MCF 10A (cell line): ENCODE measurements at regions of chr11 and their contacts with region 1.

Region 1: GRCh38 chr11:102268329-102269193 is 48.7 kb upstream of the BIRC3 start:
- DNase-seq: peak; percentile 96
- H3K4me3 Mint-ChIP-seq: peak overlapping the region; percentile 80
- H3K27ac Mint-ChIP-seq: peak overlapping the region; percentile 93
- H3K4me1 Mint-ChIP-seq: peaks cover 28% of the 10 kb centered on the region
- H3K27me3 Mint-ChIP-seq: no peaks in the 10 kb centered on the region
- CTCF ChIP-seq: peak; percentile 37

Region 2: GRCh38 chr11:101323997-101324396 is 944.6 kb before region 1 on chr11:
- CTCF ChIA-PET with region 1: no interaction called
- POLR2A ChIA-PET with region 1: no interaction called
- intact Hi-C with region 1: no loop called
- DNase-seq: peak; percentile 20
- H3K4me3 Mint-ChIP-seq: no peak overlapping the region
- H3K27ac Mint-ChIP-seq: no peak overlapping the region
- H3K4me1 Mint-ChIP-seq: no peaks in the 10 kb centered on the region
- H3K27me3 Mint-ChIP-seq: peaks cover 17% of the 10 kb centered on the region
- CTCF ChIP-seq: no peak

Region 3: GRCh38 chr11:101860696-101861427 is 407.7 kb before region 1 on chr11:
- CTCF ChIA-PET with region 1: interaction called, 40 read pairs
- POLR2A ChIA-PET with region 1: interaction called, 9 read pairs
- intact Hi-C with region 1: loop called (anchors 2 kb)
- DNase-seq: peak; percentile 67
- H3K4me3 Mint-ChIP-seq: no peak overlapping the region
- H3K27ac Mint-ChIP-seq: no peak overlapping the region
- H3K4me1 Mint-ChIP-seq: peaks cover 13% of the 10 kb centered on the region
- H3K27me3 Mint-ChIP-seq: no peaks in the 10 kb centered on the region
- CTCF ChIP-seq: peak; percentile 61

Region 4: DNA sequence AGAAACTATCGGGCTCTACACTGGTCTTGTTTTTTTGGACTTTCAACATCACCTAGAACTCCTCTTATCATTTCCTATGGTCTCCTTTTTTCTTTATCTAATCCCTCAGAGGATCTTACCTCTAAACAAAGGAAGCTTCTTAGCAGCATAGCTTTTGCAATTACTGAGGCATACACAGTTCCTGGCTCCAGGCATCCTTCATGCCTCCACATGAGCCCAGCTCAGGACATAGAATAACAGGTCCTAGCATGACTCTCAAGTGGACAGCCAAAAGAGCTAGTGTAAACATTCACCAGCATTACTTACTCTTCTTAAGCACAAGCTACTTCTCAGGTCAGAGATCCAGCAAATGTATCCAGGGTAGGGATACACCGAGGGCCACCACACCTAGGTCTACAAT is 204.2 kb before region 1 on chr11:
- CTCF ChIA-PET with region 1: interaction called, 4 read pairs
- POLR2A ChIA-PET with region 1: interaction called, 10 read pairs
- intact Hi-C with region 1: no loop called
- DNase-seq: peak; percentile 71
- H3K4me3 Mint-ChIP-seq: no peak overlapping the region
- H3K27ac Mint-ChIP-seq: peak overlapping the region; percentile 76
- H3K4me1 Mint-ChIP-seq: peaks cover 9% of the 10 kb centered on the region
- H3K27me3 Mint-ChIP-seq: no peaks in the 10 kb centered on the region
- CTCF ChIP-seq: no peak

Region 5: DNA sequence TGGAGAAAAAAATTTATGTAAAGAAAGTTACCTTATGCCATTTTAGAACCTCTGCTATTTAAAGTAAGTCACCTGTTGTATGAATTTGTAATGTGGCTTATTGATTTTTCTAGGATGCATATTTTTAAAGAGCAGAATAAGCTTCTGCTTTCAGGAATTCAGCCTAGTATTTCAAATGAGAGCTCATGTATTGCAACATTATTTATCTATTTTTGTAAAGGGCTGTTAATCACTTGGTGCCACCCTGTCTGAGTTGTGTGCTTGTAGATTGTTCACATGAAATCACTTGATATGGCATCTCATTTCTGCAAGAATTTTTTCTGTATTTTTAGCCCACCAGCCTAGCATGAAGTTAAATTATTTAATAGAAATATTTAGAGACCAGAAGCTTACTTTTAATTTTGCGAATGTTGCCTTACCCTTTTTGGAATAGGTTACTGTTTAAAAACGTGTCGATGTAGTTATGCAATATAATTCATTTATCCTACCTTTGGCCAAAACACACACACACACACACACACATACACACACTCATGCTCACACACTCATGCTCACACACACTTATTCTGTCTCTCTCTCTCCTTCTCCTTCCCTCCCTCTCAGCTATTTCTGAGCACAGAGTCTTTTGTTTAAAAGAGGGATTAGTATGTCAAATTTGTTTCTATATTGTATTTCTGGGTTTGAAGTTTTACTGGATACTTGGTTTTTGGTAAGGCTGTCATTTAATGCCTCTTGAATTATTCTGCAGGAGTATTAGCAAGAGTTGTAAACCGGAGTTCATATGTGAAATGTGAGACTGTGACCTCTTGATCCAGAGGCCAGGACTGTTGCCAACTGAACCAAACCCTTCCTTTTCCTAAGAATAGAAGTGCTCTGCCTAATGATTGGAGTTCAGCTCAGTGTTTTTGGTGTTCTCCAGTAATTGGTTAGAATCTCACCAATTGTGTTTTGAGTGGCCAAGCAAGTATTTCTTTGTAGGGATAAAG is 123.9 kb before region 1 on chr11:
- CTCF ChIA-PET with region 1: interaction called, 5 read pairs
- POLR2A ChIA-PET with region 1: interaction called, 13 read pairs
- intact Hi-C with region 1: no loop called
- DNase-seq: peak; percentile 69
- H3K4me3 Mint-ChIP-seq: peak overlapping the region; percentile 3
- H3K27ac Mint-ChIP-seq: peak overlapping the region; percentile 37
- H3K4me1 Mint-ChIP-seq: peaks cover 47% of the 10 kb centered on the region
- H3K27me3 Mint-ChIP-seq: no peaks in the 10 kb centered on the region
- CTCF ChIP-seq: no peak

Region 6: GRCh38 chr11:102197670-102198139 is 70.9 kb before region 1 on chr11:
- CTCF ChIA-PET with region 1: interaction called, 10 read pairs
- POLR2A ChIA-PET with region 1: interaction called, 8 read pairs
- intact Hi-C with region 1: no loop called
- DNase-seq: no peak
- H3K4me3 Mint-ChIP-seq: no peak overlapping the region
- H3K27ac Mint-ChIP-seq: no peak overlapping the region
- H3K4me1 Mint-ChIP-seq: peaks cover 18% of the 10 kb centered on the region
- H3K27me3 Mint-ChIP-seq: no peaks in the 10 kb centered on the region
- CTCF ChIP-seq: no peak

Region 7: GRCh38 chr11:102254045-102254444 is 14.5 kb before region 1 on chr11:
- CTCF ChIA-PET with region 1: interaction called, 27 read pairs
- POLR2A ChIA-PET with region 1: interaction called, 155 read pairs
- intact Hi-C with region 1: no loop called
- DNase-seq: peak; percentile 36
- H3K4me3 Mint-ChIP-seq: no peak overlapping the region
- H3K27ac Mint-ChIP-seq: no peak overlapping the region
- H3K4me1 Mint-ChIP-seq: peaks cover 29% of the 10 kb centered on the region
- H3K27me3 Mint-ChIP-seq: no peaks in the 10 kb centered on the region
- CTCF ChIP-seq: peak; percentile 28

Region 8: GRCh38 chr11:102306048-102306585 is 37.6 kb after region 1 on chr11:
- CTCF ChIA-PET with region 1: no interaction called
- POLR2A ChIA-PET with region 1: interaction called, 41 read pairs
- intact Hi-C with region 1: no loop called
- DNase-seq: peak; percentile 96
- H3K4me3 Mint-ChIP-seq: peak overlapping the region; percentile 50
- H3K27ac Mint-ChIP-seq: peak overlapping the region; percentile 99
- H3K4me1 Mint-ChIP-seq: peaks cover 54% of the 10 kb centered on the region
- H3K27me3 Mint-ChIP-seq: no peaks in the 10 kb centered on the region
- CTCF ChIP-seq: peak; percentile 17

Region 9: DNA sequence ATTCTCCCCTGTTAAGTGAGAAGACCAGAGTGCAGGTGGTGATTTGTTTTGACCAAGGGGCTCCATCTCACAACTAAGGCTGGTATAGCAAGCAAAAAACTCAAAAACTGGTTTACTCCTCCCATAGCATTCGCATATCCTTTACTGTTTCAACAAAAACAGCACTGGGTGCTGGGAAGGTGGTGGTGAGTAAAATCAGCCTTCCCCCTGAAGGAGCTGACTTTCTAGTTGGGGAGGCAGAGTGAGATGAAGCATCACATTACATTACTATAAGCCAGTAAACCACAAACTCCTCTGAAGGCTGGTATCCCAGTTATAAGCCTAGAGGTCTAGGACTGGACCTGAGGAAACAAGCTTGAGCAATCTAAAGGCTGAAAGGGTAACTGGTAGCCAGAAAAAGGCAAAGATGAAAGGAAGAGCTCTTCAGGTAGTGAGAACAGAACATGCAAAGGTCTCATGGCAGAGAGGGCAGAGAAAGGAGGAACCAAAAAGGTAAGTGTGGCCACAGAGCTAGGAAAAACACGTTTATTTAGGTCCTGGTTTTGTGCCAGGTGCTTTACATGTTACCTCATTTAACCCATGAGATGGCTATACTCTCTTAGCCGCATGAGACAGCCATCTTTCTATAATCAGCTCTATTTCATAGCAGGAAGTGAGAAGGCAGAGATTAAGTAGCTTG is 161.7 kb after region 1 on chr11:
- CTCF ChIA-PET with region 1: no interaction called
- POLR2A ChIA-PET with region 1: no interaction called
- intact Hi-C with region 1: no loop called
- DNase-seq: no peak
- H3K4me3 Mint-ChIP-seq: no peak overlapping the region
- H3K27ac Mint-ChIP-seq: no peak overlapping the region
- H3K4me1 Mint-ChIP-seq: no peaks in the 10 kb centered on the region
- H3K27me3 Mint-ChIP-seq: no peaks in the 10 kb centered on the region
- CTCF ChIP-seq: no peak

Region 10: DNA sequence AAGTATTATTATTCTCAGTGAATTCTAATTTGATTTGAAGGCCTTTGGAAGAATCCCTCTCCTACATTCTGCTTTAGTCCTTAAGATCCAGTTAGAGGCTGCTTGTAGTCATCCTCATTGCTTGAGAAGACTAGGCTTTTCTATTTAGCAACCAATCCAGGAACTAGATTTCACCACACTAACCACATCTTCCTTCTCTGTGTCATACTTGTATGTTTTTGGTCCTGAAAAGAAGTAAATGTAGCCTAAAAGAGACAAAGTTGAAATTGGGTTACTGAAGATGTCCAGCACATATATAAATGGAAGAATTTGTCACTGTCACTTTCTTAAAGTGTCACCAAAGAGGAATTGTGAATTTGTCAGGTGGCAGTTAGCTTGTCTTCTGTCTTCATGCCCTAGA is 308.6 kb after region 1 on chr11:
- CTCF ChIA-PET with region 1: no interaction called
- POLR2A ChIA-PET with region 1: no interaction called
- intact Hi-C with region 1: no loop called
- DNase-seq: no peak
- H3K4me3 Mint-ChIP-seq: no peak overlapping the region
- H3K27ac Mint-ChIP-seq: no peak overlapping the region
- H3K4me1 Mint-ChIP-seq: peaks cover 6% of the 10 kb centered on the region
- H3K27me3 Mint-ChIP-seq: no peaks in the 10 kb centered on the region
- CTCF ChIP-seq: no peak